K562 (cell line): ENCODE measurements at regions of chr22 and their contacts with region 1.

Region 1: GRCh38 chr22:44272401-44272771 is 40.4 kb downstream of the SHISAL1 start:
- DNase-seq: no peak
- ATAC-seq: no peak
- H3K4me3 ChIP-seq: no peak overlapping the region
- H3K27ac ChIP-seq: no peak overlapping the region
- H3K4me1 ChIP-seq: no peaks in the 10 kb centered on the region
- H3K27me3 ChIP-seq: peaks cover 8 to 45% of the 10 kb centered on the region in 2 experiments; a peak in 3 of 5 replicates
- CTCF ChIP-seq: no peak
- EP300 ChIP-seq: no peak
- POLR2A ChIP-seq: no peak
- RAD21 ChIP-seq: no peak

Region 2: DNA sequence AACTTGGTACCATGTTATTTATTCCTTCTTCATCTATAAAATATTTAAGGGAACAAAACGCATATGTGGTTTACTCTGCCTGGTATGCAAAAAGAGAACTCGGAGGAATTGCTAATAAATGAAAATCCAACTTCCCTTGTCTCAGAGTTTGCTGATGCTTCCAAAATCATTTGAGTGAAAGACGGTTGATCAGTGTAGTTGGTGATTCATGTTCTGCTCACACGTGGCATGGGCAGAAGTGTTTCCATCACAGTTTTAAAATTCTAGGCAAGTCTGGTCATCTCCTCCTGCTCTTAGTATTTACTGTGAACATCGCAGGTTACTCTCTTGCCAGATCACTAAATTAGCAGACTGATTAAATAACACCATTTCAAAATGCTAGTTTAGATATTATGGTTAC is 260.2 kb before region 1 on chr22:
- CTCF ChIA-PET with region 1: no interaction called
- POLR2A ChIA-PET with region 1: no interaction called
- in situ Hi-C with region 1: no loop called
- intact Hi-C with region 1: loop called (anchors 5 kb)
- DNase-seq: no peak
- ATAC-seq: no peak
- H3K4me3 ChIP-seq: no peak overlapping the region
- H3K27ac ChIP-seq: no peak overlapping the region
- H3K4me1 ChIP-seq: peaks cover 0 to 2% of the 10 kb centered on the region in 2 experiments; a peak in 2 of 5 replicates
- H3K27me3 ChIP-seq: no peaks in the 10 kb centered on the region
- CTCF ChIP-seq: no peak
- EP300 ChIP-seq: no peak
- POLR2A ChIP-seq: no peak
- RAD21 ChIP-seq: no peak

Region 3: GRCh38 chr22:44151676-44152075 is 120.7 kb before region 1 on chr22:
- CTCF ChIA-PET with region 1: no interaction called
- POLR2A ChIA-PET with region 1: no interaction called
- in situ Hi-C with region 1: no loop called
- intact Hi-C with region 1: no loop called
- DNase-seq: no peak
- ATAC-seq: no peak
- H3K4me3 ChIP-seq: no peak overlapping the region
- H3K27ac ChIP-seq: no peak overlapping the region
- H3K4me1 ChIP-seq: peaks cover 0 to 1% of the 10 kb centered on the region in 2 experiments; a peak in 2 of 5 replicates
- H3K27me3 ChIP-seq: no peaks in the 10 kb centered on the region
- CTCF ChIP-seq: no peak
- EP300 ChIP-seq: no peak
- POLR2A ChIP-seq: no peak
- RAD21 ChIP-seq: no peak

Region 4: DNA sequence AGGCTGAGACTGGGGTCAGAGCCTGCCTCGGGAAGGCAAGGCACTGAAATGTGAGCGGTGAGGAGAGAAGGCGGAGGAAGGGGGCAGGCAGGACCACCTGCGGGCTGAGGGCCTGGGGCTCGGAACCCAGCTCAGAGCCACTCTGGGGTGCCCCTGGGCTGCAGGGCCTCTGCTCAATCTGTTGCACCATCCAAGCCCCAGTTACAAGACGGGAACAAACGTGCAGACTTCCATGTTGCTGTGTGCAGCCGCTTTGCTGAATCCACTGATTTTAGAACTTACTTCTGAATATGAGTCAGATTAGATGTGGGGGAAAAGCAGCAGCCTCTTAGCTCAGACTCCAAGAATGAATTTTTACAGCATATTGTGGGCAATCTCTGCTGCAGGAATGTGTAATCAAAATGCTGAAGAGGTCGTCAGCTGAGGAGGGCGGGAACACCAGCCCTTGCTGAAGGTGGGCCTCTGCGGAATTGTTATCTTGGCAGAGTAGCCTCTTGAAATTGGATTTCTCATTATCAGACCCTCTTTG is 70.1 kb before region 1 on chr22:
- CTCF ChIA-PET with region 1: no interaction called
- POLR2A ChIA-PET with region 1: no interaction called
- in situ Hi-C with region 1: no loop called
- intact Hi-C with region 1: no loop called
- DNase-seq: no peak
- ATAC-seq: no peak
- H3K4me3 ChIP-seq: no peak overlapping the region
- H3K27ac ChIP-seq: no peak overlapping the region
- H3K4me1 ChIP-seq: peaks cover 0 to 5% of the 10 kb centered on the region in 2 experiments; a peak in 1 of 5 replicates
- H3K27me3 ChIP-seq: peaks cover 3 to 33% of the 10 kb centered on the region in 2 experiments; a peak in 3 of 5 replicates
- CTCF ChIP-seq: no peak
- EP300 ChIP-seq: no peak
- POLR2A ChIP-seq: no peak
- RAD21 ChIP-seq: no peak

Region 5: GRCh38 chr22:44304354-44304753 is 32.0 kb after region 1 on chr22:
- CTCF ChIA-PET with region 1: no interaction called
- POLR2A ChIA-PET with region 1: no interaction called
- in situ Hi-C with region 1: no loop called
- intact Hi-C with region 1: no loop called
- DNase-seq: no peak
- ATAC-seq: no peak
- H3K4me3 ChIP-seq: no peak overlapping the region
- H3K27ac ChIP-seq: no peak overlapping the region
- H3K4me1 ChIP-seq: no peaks in the 10 kb centered on the region; a peak in 1 of 5 replicates
- H3K27me3 ChIP-seq: peaks cover 4 to 19% of the 10 kb centered on the region in 2 experiments; a peak in 2 of 5 replicates
- CTCF ChIP-seq: no peak
- EP300 ChIP-seq: no peak
- POLR2A ChIP-seq: no peak
- RAD21 ChIP-seq: no peak